Posterior cingulate gyrus (tissue), 11 donors: ENCODE measurements at regions of chr1 and their contacts with region 1.

Region 1: GRCh38 chr1:10430216-10431069 is at the start of gene CENPS:
- DNase-seq: peak; percentile 67 to 96 (median 76)

Region 2: DNA sequence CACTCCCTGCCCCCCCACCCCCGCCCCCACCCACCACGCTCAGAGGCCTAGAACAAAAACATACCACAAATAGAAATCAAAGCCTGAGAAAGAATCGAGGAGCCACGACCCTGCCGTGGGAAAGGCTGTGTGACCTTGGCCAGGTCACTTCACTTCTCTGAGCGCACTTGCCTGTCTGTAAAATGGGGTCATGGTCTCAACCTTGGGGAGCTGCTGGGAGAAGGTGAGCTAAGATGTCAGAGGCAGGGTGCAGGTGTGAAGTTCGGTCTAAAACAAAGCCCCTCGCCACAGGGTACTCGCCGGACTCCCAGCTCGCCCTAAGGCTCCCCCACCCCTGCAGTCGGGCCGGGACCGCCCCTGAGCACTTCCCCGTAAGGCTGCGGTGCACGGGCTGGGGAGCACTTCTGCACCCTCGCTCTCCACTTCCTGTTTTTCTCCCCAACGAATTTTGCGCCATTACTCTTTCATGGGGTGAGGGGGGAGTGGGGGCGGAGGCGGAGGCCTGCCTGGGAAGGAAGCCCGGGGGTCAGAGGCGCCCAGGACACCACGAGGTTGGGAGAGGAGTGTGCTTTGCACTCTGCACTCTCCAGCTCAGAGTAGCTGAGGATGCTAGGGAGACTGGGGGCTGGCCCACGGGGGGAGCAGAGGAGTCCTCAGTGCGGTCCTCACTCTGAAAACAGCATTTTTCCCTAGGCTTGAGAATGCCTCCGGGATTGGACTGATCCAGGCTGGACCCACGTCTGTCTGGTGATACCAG is 800.8 kb before region 1 on chr1:
- intact Hi-C with region 1: loop called (anchors 5 kb)
- DNase-seq: peak in 2 of 10 donors; percentile 23 to 27

Region 3: DNA sequence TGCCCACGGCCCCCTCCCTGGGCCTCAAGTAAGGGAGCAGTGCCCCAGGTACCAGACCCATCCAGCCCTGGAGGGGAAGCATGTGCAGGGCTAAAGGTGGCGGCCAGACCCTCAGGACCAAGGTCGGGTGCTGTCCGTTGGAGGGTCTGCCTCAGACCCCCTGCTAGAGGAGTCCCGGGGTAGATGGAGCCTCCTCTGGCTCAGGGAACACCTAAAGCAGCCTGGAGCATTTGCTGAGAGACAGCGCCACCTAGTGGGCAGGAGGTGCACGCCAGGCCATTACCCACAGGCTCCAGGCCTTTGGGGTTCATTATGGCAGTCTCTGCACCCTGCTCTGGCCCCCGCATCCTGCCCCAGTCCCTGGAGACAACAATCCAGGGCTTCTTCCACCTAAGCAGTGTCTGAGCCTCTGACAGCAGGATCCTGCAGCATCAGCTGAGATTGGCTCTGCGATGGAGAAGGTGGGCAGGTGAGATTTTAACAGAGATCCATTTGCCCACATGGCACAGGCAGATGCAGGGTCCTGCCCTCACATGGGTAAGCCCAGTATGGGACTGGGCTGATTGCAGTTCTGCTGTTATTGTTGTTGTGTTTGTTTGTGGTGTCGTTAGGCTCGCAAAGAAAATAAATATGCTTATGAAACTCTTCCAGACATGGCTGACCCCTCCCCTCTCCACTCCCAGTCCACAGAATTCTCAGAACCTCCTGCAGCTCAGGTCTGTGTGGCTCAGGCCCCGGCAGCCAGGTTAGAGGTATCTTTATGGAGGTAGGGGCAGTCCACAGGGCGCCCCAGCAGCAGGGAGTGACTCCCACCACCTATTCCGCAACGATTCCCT is 562.8 kb before region 1 on chr1:
- intact Hi-C with region 1: no loop called
- DNase-seq: peak; percentile 67 to 97 (median 89)

Region 4: DNA sequence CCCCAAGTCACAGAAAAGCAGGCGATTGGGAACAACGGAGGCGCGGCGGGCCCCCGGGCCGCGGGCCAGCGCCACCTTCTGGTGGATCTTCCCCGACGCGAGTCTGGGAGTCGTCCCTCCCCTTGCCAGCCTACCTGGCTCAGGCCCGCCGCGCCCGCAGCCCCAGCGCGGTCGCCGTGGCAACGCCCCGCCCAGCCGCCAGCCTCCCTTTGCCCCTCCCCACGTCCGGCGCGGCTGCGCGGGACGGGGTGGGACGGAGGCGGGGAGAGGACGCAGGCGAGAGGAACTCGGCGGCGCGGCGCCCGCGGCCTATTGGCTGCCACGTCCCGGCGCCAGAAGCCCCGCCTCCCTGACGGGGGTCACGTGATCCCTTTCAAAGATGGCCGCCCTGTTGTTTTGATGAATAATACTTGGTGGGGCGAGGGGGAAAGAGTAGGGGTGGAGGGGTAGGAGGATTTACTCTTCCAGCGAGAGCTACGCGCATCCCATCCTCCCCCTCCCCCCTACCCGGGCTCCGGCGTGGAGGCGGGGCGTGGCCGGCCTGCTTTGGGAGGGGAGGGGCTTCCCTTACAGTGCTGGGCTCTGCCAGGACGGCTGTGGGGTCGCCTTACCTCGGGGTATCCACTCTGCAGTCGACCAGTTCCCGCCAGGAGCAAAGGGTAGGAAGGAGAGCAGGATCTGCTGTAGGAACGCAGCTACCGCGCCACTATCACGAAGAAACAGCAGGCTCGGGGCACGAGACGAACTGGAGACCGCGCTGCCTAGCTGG is 397.7 kb before region 1 on chr1 and contains the start of gene UBE4B:
- intact Hi-C with region 1: loop called (anchors 10 kb)
- DNase-seq: peak; percentile 96 to 100 (median 98)

Region 5: DNA sequence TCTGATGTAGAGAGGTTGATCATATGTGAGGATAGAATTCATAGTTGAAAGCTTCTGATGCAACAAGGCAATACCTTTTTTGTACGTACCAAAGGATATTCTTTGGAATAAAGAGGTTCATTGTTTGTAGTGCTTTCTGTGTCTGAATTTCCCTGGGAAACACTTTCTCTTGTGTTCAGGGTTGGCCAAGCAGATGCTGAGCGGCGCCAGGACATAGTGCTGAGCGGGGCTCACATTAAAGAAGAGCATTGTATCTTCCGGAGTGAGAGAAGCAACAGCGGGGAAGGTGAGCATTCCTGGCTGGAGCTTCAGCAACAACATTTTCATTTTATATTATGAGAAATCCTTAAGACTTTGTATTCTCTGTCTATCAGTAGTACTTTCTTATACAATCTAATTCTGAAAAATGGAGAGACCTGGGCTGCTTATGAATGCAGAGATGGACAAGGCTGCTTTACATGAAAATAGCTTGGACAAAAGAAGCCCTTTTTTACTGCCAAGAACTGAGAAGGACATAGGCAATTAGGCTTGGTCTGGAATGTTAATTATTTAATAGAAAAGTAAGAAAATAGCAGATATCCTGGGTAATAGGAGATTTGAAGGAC is 134.9 kb before region 1 on chr1:
- intact Hi-C with region 1: no loop called
- DNase-seq: peak; percentile 35 to 91 (median 58)

Region 6: GRCh38 chr1:10308001-10308400 is 122.4 kb before region 1 on chr1:
- intact Hi-C with region 1: no loop called
- DNase-seq: no peak

Region 7: GRCh38 chr1:10378081-10378841 is 52.2 kb before region 1 on chr1:
- intact Hi-C with region 1: loop called (anchors 1 kb)
- DNase-seq: peak in 5 of 10 donors; percentile 14 to 86 (median 17)

Region 8: DNA sequence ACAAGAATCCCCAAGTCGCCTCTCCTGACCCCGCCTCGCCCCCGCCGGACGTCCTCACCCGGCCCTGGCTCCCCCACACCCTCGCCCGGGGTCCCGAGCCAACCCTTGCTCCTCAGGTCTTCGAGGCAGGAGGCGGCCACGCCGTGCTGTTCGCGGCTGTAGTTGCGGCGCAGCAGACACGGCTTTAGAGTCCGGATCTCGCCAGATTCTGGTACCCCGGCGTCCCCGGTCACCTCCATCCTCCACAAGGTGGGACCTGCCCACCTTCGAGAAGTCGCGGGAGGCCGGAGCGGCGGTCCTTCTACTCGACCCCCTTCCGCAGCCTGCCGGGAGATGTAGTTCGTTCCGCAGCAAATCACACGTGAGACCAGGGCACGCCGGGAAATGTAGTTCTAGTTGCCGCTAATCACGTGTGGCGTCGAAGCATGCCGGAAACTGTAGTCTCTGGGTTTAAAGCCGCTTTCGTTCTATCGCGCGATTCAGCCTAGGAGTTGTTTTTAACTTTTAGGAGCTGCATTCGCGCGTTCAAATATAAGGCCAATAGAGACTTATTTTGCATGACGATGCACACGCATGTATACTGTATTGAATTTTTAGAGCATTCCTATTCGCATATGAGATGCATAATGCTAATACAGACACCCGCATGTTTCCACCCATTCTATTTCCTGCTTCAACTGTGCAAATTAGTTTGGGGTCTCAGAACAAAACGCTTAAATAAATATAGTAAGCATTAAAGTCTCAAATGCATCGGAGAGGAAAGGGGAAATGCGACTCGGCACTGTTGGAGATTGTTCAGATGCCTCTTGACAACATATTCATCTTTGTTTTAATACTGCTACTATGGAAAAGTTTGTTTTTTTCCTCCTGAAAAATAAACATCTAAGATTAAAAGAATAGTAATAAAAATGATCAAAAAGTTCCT is 42.0 kb after region 1 on chr1 and contains the start of gene DFFA:
- intact Hi-C with region 1: loop called (anchors 2 kb)
- DNase-seq: peak; percentile 92 to 99 (median 96)

Region 9: GRCh38 chr1:10856863-10857598 is 426.6 kb after region 1 on chr1:
- intact Hi-C with region 1: no loop called
- DNase-seq: no peak